ENCODE measurements at regions of chr7 and their contacts with region 1.

Region 1: DNA sequence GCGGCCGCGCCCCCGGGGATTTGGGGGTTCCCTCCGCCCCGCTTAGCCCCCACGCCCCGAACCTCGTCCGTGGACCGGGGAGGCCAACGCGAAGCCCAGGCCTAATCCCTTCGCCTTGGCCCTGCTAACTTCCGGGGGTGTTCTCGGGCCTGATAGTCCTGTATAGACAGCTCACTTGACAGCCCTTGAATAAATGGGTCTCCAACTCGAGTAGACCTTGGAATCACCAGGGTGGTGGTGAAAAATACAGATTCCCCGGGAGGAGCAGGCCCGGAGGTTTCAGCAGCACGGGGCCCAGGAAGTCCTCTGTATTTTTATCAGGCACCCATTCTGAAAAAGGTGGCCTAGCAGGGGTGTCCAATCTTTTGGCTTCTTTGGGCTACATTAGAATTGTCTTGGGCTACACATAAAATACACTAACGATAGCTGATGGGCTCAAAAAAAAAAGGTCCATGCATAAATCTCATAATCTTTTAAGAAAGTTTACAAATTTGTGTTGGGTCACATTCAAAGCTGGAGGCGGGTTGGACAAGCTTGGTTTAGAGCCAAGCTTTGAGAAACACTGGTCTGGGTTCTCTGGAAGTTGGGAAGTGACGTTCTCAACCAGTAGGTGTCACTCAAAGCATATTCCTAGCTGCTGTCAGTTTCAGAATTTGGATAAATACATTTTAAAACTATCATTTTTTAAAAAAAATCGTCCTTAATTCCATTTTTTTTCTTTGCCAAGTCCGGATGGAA is 221.7 kb downstream of the PHTF2 start:
- DNase-seq: peak; percentile 77
- H3K4me3 Mint-ChIP-seq: peak overlapping the region; percentile 80
- H3K27ac Mint-ChIP-seq: peak overlapping the region; percentile 64
- H3K4me1 Mint-ChIP-seq: peaks cover 13% of the 10 kb centered on the region
- H3K27me3 Mint-ChIP-seq: peaks cover 53% of the 10 kb centered on the region

Region 2: DNA sequence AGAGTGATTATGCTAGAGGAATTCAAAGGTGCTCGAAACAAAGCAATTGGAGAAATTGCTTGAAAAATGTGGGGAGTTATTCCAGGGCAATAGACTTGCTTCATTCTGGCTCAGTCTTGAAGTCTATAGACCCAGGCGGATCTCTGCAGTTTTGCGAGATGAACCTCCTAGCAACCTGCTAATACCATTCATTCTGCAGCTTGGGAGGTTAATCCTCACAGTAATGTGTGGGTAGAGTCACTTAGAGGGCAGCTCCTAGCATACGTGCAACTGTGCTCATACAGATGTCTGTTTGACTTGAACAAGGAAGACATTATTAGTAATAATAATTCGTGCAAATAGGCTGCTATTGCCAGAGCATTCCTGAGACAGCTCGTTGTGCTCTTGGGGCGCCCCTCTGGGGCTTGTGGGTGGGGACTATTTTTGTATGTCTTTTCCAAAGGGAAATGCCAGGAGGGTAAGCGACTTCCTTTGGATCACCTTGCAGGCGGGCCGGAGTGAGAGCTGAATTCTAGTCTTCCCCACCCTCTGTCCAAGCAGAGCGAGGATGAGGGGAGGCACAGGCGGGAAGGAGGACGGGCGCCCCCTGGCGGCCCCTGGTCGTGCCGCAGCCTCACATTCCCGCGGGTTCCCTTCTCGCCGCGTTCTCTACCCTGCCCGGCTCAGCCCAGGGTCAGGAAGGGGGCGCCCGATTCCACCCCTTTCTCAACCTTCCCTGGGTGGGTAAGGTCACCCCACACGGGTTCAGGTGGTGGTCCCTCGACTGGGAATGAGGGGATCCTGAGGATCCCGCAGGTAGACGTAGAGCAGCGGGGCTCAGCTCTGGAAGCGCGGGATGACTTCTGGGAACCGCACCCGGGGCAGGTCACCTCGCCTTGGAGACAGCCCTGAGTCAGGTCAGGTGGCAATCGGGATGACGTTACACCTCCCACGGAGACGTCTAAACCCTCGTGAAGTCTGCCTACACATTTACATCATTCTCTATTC is 19.8 kb after region 1 on chr7:
- intact Hi-C with region 1: loop called (anchors 2 kb)
- DNase-seq: peak; percentile 81
- H3K4me3 Mint-ChIP-seq: no peak overlapping the region
- H3K27ac Mint-ChIP-seq: no peak overlapping the region
- H3K4me1 Mint-ChIP-seq: no peaks in the 10 kb centered on the region
- H3K27me3 Mint-ChIP-seq: peaks cover 11% of the 10 kb centered on the region